ENCODE measurements at regions of chr20 and their contacts with region 1.

Region 1: GRCh38 chr20:12970372-12970821 is 38.4 kb upstream of the SPTLC3 start:
- DNase-seq: peak in 3 of 5 donors; percentile 27 to 71 (median 69)
- H3K4me3 ChIP-seq: no peak overlapping the region
- H3K27ac ChIP-seq: no peak overlapping the region
- H3K4me1 ChIP-seq: no peaks in the 10 kb centered on the region
- H3K27me3 ChIP-seq: no peaks in the 10 kb centered on the region
- CTCF ChIP-seq: peak; percentile 73

Region 2: DNA sequence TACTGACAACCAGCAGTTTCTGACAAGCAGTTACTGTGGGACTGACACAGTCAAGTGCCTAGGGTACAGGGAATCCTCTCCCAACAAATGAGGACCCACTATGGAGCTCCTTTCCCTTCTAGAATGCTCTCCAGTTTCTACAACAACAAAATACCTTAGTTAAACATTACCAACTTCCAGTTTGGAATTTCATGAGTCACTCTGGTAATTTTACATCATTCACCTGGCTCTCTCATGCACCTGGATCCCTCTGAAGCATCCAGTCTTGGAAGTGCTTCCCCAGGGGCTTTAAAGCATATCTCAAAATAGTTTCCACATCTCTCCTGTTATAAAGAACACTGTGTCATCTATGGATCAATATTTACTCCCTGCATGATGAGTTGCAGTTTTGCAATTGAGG is 248.3 kb before region 1 on chr20:
- intact Hi-C with region 1: no loop called
- DNase-seq: peak in 2 of 5 donors; percentile 73
- H3K4me3 ChIP-seq: no peak overlapping the region
- H3K27ac ChIP-seq: no peak overlapping the region
- H3K4me1 ChIP-seq: no peaks in the 10 kb centered on the region
- H3K27me3 ChIP-seq: no peaks in the 10 kb centered on the region
- CTCF ChIP-seq: no peak

Region 3: GRCh38 chr20:13105864-13106457 is 135.6 kb after region 1 on chr20:
- intact Hi-C with region 1: loop called (anchors 5 kb)
- DNase-seq: peak in 2 of 5 donors; percentile 42 to 64
- H3K4me3 ChIP-seq: no peak overlapping the region
- H3K27ac ChIP-seq: no peak overlapping the region
- H3K4me1 ChIP-seq: peaks cover 0 to 6% (median 0%) of the 10 kb centered on the region in 3 donors
- H3K27me3 ChIP-seq: no peaks in the 10 kb centered on the region
- CTCF ChIP-seq: peak; percentile 61

Region 4: GRCh38 chr20:13610184-13610583 is 639.8 kb after region 1 on chr20:
- intact Hi-C with region 1: no loop called
- DNase-seq: no peak
- H3K4me3 ChIP-seq: no peak overlapping the region
- H3K27ac ChIP-seq: no peak overlapping the region
- H3K4me1 ChIP-seq: peaks cover 0 to 6% (median 0%) of the 10 kb centered on the region in 3 donors
- H3K27me3 ChIP-seq: no peaks in the 10 kb centered on the region
- CTCF ChIP-seq: no peak